RWPE1 (cell line): ENCODE measurements at regions of chr4 and their contacts with region 1.

Region 1: GRCh38 chr4:141565379-141566089 is 70.8 kb upstream of the IL15 start:
- DNase-seq: no peak
- H3K27ac ChIP-seq: no peak overlapping the region
- CTCF ChIP-seq: no peak

Region 2: GRCh38 chr4:141294306-141294705 is 271.2 kb before region 1 on chr4:
- CTCF ChIA-PET with region 1: no interaction called
- POLR2A ChIA-PET with region 1: no interaction called
- DNase-seq: no peak
- H3K27ac ChIP-seq: no peak overlapping the region
- CTCF ChIP-seq: no peak

Region 3: DNA sequence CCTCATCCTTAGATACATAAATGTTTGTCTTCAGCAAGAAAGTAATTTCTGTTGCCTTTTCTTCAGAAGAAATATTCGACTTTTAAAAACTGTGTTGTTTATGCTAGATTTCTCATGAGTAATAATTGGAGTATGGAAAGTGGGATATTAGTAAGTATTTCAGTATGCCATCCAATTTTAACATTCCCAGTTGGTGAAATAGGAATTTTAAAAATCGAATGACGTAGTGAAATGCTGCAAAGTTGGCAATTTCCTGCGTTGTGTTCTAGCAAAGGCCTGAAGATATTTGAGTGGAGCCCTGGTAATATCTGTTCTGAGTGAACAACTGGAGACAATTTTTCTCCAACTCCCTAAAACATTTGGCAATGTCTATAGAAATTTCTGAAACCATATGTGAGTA is 154.7 kb before region 1 on chr4:
- CTCF ChIA-PET with region 1: no interaction called
- POLR2A ChIA-PET with region 1: no interaction called
- DNase-seq: no peak
- H3K27ac ChIP-seq: no peak overlapping the region
- CTCF ChIP-seq: no peak

Region 4: DNA sequence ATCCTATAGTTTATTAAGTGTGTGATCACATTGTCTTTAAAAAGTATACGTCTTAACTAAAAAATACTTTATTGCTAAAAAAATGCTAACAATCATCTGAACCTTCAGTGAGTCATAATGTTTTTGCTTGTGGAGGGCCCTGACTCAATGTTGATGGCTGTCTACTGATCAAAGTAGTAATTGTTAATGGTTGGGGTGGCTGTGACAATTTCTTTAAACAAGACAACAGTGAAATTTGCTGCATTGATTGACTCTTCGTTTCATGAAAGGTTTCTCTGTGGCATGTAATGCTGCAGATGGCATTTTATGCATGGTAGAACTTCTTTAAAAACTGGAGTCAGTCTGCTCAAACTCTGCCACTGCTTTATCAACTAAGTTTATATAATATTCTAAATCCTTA is 30.5 kb before region 1 on chr4:
- CTCF ChIA-PET with region 1: no interaction called
- POLR2A ChIA-PET with region 1: no interaction called
- DNase-seq: no peak
- H3K27ac ChIP-seq: no peak overlapping the region
- CTCF ChIP-seq: no peak

Region 5: GRCh38 chr4:141575884-141576283 is 10.3 kb after region 1 on chr4:
- CTCF ChIA-PET with region 1: interaction called, 11 read pairs
- POLR2A ChIA-PET with region 1: no interaction called
- DNase-seq: no peak
- H3K27ac ChIP-seq: no peak overlapping the region
- CTCF ChIP-seq: no peak